ENCODE measurements at regions of chr19 and their contacts with region 1.

Region 1: DNA sequence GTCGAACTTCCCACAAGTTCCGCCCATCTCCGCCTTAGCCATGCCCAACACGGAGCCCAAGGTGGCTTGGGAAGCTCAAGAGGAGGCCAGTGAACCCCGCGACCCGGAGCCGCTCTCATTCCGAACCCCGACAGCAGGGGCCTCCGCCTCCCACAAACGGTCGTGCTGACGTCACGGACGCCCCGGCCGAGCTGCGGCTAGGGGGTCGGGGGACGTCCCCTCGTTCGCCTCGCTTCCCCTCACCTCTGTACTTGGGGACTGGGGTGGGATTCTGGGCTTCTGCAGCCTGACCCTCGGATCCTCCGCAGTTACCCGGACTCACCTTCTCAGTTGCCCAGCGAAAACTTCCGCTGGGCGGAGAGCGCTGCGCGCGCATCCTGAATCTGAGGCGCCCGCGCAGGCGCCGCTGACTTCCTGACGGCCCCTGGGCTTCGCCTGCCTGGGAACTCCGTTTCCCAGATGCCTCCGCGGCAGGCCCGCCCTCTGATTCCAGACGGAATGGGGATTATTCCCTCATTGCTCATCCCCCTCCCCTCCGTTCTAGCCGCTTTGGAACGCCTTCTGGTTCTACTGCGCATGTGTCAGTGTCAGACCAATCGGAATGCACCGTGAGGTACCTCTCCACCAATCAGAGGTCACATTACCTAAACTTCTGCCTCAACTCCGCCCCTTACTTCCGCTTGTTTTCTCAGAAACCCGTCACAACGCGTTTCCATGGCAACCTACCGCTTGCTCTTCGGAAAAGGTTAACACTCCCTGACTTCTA is at the start of gene VRK3:
- DNase-seq: peak; percentile 98
- H3K4me3 Mint-ChIP-seq: peak within 1 kb of the TSS; percentile 85
- H3K27ac Mint-ChIP-seq: peak within 1 kb of the TSS; percentile 86
- H3K4me1 Mint-ChIP-seq: peaks cover 49% of the 10 kb centered on the region
- H3K27me3 Mint-ChIP-seq: no peaks in the 10 kb centered on the region
- total RNA-seq, gene VRK3: 80.0 to 80.6 TPM

Region 2: DNA sequence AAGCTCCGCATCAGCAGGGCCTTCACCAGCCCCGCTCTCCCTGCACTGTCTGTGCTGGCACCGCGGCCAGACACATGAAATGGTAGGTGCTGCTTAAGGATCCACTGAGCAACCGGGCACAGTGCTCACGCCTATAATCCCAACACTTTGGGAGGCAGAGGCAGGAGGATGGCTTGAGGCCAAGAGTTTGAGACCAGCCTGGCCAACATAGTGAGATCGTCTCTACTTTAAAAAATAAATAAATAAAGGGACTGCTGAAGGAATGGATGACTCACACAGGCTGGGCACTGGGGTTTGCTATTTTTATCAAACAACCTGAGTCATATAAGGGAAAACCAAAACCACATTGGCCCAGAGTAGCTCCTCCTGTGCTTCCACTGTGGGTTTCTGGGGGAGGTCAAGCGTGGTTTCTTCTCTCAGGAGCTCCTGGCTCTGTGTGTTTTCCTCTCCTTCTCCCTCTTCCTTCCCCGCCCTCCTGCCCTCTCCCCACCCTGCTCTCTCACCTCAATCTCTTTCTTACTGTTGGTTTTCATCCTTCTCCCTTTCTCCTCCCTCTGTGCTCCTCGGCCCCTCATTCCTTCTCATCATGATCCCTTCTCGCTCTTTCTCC is 21.3 kb before region 1 on chr19:
- CTCF ChIA-PET with region 1: no interaction called
- POLR2A ChIA-PET with region 1: interaction called, 10 read pairs
- DNase-seq: peak; percentile 65
- H3K4me3 Mint-ChIP-seq: peak overlapping the region; percentile 45
- H3K27ac Mint-ChIP-seq: peak overlapping the region; percentile 17
- H3K4me1 Mint-ChIP-seq: peaks cover 44% of the 10 kb centered on the region
- H3K27me3 Mint-ChIP-seq: no peaks in the 10 kb centered on the region

Region 3: DNA sequence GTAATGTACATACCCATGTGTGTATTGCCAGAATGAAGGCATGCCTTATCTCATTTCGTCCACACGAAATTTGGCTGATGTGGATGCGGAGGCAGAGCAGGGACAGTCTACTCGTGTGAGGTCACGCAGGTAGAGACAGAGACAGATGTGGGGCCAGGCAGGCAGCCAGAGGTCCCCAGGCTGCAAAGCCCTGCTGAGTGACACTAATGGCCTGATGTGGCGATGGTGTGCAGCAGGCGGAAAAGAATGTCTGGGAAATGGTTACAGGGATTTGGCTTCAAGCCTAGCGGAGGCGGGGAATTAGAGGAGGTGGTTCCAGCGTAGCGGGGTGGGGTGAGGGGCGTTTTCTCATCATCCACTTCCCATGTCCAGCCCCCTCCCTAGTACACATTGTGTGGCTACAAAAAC is 142.1 kb after region 1 on chr19:
- CTCF ChIA-PET with region 1: no interaction called
- POLR2A ChIA-PET with region 1: no interaction called
- DNase-seq: no peak
- H3K4me3 Mint-ChIP-seq: no peak overlapping the region
- H3K27ac Mint-ChIP-seq: no peak overlapping the region
- H3K4me1 Mint-ChIP-seq: no peaks in the 10 kb centered on the region
- H3K27me3 Mint-ChIP-seq: peaks cover 4% of the 10 kb centered on the region